Psoas muscle (tissue), 8 donors: ENCODE measurements at regions of chr19 and their contacts with region 1.

Region 1: DNA sequence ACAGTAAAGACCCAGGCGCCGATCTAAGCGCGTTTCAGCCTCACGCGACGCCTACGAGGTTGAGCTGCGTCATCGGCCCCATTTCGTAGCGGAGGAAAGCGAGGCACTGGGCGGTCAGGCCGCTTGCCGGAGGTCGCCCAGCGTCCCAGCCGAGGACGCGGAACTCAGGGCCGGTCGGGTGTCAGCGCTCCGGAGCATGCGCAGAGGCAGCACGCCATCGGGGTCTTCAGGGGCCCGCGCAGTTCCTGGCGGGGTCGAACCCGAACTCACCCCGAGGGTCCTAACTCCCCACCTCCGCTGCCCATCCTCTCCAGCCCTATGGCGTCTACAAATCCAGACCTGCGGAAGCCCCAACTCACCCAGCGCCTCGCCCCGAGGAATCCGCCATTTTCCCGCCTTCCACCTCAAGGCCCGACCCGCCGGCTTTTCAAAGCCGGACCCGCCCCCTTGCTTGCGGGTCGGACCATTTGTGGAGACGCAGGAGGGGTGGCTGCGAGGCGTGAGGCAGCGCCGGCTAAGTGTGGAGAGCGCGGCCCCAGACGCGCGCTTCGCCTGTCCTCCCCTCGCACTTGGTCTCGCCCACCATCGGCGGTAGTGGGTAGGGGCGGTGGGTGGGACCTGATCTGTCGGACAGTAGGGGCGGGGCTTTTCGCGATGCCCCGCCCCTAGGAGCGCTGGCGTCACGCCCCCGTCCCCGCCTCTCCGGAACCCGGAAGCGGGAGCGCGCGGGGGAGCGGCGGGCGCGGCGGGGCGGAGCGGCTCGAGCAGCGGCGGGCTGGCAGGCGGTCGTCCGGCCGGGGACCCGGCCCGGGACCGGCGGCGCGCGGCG is at the starts of genes HAUS8 and MYO9B:
- DNase-seq: peak; percentile 99 to 100
- ATAC-seq: peak; percentile 97 to 99 (median 98)
- H3K4me3 ChIP-seq: peak within 1 kb of the TSS; percentile 91
- H3K27ac ChIP-seq: peak within 1 kb of the TSS; percentile 81
- H3K4me1 ChIP-seq: peaks cover 21% of the 10 kb centered on the region
- H3K27me3 ChIP-seq: no peaks in the 10 kb centered on the region
- CTCF ChIP-seq: no peak
- total RNA-seq, gene HAUS8: 1.8 to 5.9 (median 3.6) TPM
- total RNA-seq, gene MYO9B: 13.8 to 16.4 (median 14.5) TPM

Region 2: DNA sequence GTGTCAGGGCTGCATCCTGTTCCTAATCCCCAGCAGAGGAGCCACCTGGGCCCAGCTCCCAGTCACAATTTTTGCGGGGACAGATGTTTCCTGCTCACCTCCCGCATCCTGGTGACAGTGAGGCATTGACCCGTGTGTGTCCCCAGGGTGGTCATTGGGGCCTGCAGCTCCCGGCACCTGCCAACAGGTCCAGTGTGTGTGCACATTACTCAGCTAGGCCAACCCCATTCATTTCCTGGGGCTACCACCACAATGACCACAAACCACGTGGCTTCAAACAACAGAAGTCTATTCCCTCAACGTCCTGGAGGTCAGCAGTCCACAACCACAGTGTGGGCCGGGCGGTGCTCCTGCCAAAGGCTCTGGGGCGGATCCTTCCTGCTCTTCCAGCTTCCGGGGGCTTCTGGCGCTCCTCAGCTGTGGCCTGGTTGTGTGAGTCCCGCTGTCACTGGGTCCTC is 198.3 kb before region 1 on chr19:
- intact Hi-C with region 1: no loop called
- DNase-seq: no peak
- ATAC-seq: peak in 2 of 4 donors; percentile 47 to 51
- H3K4me3 ChIP-seq: no peak overlapping the region
- H3K27ac ChIP-seq: no peak overlapping the region
- H3K4me1 ChIP-seq: no peaks in the 10 kb centered on the region
- H3K27me3 ChIP-seq: no peaks in the 10 kb centered on the region
- CTCF ChIP-seq: no peak

Region 3: GRCh38 chr19:17135001-17135853 is 60.0 kb after region 1 on chr19:
- intact Hi-C with region 1: loop called (anchors 2 to 5 kb)
- DNase-seq: peak; percentile 93 to 96
- ATAC-seq: peak; percentile 94 to 96 (median 94)
- H3K4me3 ChIP-seq: peak overlapping the region; percentile 52
- H3K27ac ChIP-seq: peak overlapping the region; percentile 85
- H3K4me1 ChIP-seq: peaks cover 34% of the 10 kb centered on the region
- H3K27me3 ChIP-seq: no peaks in the 10 kb centered on the region
- CTCF ChIP-seq: no peak

Region 4: DNA sequence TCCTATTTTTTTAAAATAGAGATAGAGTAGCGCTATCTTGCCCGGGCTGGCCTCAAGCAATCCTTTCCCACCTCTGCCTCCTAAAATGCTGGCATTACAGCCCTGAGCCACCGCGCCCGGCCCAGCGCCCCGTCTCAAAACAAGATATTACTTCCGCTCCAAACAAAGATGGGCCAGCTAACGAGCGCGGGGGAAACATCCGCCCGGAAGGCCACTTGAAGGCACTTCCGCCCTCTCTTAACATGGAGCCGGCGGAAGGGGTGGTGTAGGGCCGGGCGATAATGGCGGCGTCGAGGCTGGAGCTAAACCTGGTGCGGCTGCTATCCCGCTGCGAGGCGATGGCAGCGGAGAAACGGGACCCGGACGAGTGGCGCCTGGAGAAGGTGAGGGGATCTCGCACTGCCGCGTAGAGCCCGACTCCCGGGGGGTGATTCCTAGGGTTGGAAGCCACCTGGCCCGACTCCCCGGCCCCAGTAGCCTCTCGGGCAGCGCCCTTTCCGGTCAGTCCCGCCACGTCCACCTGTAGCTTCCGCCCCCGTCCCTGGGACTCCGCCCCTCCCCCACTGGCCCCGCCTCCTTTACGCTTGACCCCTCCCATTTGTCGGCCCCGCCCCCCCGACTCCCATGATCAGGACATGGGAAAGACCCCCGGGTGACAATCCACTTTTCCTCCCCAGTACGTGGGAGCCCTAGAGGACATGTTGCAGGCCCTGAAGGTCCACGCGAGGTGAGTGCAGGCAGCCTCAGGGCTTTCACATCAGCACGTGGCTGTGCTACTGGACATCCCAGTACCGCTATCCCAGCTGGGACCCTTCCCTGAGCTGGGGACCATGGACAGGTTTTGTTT is 140.1 kb after region 1 on chr19 and contains the start of gene USE1:
- intact Hi-C with region 1: loop called in 1 of 2 experiments (anchors 1 kb)
- DNase-seq: peak; percentile 90 to 95
- ATAC-seq: peak; percentile 94 to 97 (median 95)
- H3K4me3 ChIP-seq: peak within 1 kb of the TSS; percentile 84
- H3K27ac ChIP-seq: peak within 1 kb of the TSS; percentile 95
- H3K4me1 ChIP-seq: peaks cover 5% of the 10 kb centered on the region
- H3K27me3 ChIP-seq: no peaks in the 10 kb centered on the region
- CTCF ChIP-seq: no peak
- total RNA-seq, gene USE1: 25.5 to 41.2 (median 30.5) TPM